ENCODE measurements at regions of chr6 and their contacts with region 1.

Region 1: GRCh38 chr6:70686548-70687133 is 19.0 kb downstream of the SMAP1 start:
- DNase-seq: no peak
- H3K4me3 ChIP-seq: no peak overlapping the region
- H3K27ac ChIP-seq: no peak overlapping the region
- H3K4me1 ChIP-seq: peaks cover 49% of the 10 kb centered on the region
- H3K27me3 ChIP-seq: no peaks in the 10 kb centered on the region
- CTCF ChIP-seq: peak; percentile 79

Region 2: GRCh38 chr6:70547313-70547712 is 139.3 kb before region 1 on chr6:
- intact Hi-C with region 1: loop called (anchors 10 kb)
- DNase-seq: no peak
- H3K4me3 ChIP-seq: no peak overlapping the region
- H3K27ac ChIP-seq: peak overlapping the region; percentile 4
- H3K4me1 ChIP-seq: peaks cover 8% of the 10 kb centered on the region
- H3K27me3 ChIP-seq: no peaks in the 10 kb centered on the region
- CTCF ChIP-seq: peak; percentile 61

Region 3: GRCh38 chr6:70849348-70850069 is 162.9 kb after region 1 on chr6:
- intact Hi-C with region 1: no loop called
- DNase-seq: no peak
- H3K4me3 ChIP-seq: no peak overlapping the region
- H3K27ac ChIP-seq: no peak overlapping the region
- H3K4me1 ChIP-seq: no peaks in the 10 kb centered on the region
- H3K27me3 ChIP-seq: no peaks in the 10 kb centered on the region
- CTCF ChIP-seq: no peak

Measured in left ventricle myocardium inferior (tissue), 1 donor.